ENCODE measurements at regions of chr1 and their contacts with region 1.

Region 1: GRCh38 chr1:181929363-181929762 is 132.1 kb downstream of the ZNF648 start:
- DNase-seq: peak; percentile 16
- H3K4me3 Mint-ChIP-seq: no peak overlapping the region
- H3K27ac Mint-ChIP-seq: no peak overlapping the region
- H3K4me1 Mint-ChIP-seq: no peaks in the 10 kb centered on the region
- H3K27me3 Mint-ChIP-seq: peaks cover 26% of the 10 kb centered on the region
- CTCF ChIP-seq: no peak

Region 2: DNA sequence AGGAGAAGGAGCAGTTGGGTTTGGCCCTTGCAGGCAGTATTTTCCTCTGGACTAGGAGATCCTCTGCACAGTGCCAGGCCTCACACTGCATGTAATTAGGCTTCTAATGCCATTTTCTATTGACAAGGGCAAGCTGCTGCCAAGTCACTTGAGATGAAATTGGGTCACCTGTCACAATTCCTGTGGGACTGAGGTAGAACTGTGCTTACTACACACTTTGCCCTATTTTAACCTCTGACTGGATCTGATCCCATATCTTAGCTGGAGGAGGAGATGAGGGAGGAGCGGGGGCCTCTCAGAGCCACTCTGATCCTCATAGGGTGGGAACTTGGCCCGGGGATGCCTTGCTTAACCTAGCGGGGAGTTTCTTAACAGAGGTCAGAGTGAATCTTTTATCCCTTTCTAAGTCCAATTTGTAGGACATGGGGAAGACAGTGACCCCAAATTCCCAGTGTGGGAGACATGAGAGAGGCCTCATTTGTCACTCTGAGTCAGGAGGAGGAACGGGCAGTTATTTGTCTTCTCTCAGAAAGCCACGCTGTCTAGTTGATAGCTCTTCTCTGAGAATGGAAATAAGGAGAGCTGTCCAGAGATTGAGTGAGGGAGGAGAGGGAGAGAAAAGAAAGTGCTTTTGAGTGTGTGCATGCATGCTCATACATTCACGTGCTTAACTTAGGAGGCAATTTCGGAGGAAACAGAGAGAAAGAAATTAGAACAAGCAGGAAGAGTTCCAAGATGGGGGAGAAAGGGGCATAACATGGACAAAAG is 324.7 kb before region 1 on chr1:
- CTCF ChIA-PET with region 1: no interaction called
- POLR2A ChIA-PET with region 1: no interaction called
- intact Hi-C with region 1: no loop called
- DNase-seq: no peak
- H3K4me3 Mint-ChIP-seq: no peak overlapping the region
- H3K27ac Mint-ChIP-seq: no peak overlapping the region
- H3K4me1 Mint-ChIP-seq: no peaks in the 10 kb centered on the region
- H3K27me3 Mint-ChIP-seq: peaks cover 38% of the 10 kb centered on the region
- CTCF ChIP-seq: no peak

Region 3: DNA sequence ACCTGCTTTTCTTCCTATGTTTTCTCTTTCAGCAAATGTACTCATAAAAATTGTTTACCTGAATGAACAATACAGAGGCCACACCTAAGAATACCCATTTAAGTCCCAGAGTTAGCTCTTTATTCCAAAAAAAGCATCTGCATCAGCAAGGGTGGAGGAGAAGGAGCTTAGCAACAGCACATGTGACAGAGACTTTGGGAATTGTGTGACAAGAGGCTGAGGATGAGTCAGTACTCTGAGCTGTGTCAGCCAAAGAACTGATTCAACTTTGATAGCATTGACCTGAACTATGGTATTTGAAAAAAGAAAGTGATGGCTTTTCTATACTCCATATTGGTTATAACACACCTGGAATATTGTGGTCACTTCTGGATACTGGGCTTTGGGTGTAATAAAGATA is 30.6 kb before region 1 on chr1:
- CTCF ChIA-PET with region 1: no interaction called
- POLR2A ChIA-PET with region 1: no interaction called
- intact Hi-C with region 1: no loop called
- DNase-seq: no peak
- H3K4me3 Mint-ChIP-seq: no peak overlapping the region
- H3K27ac Mint-ChIP-seq: no peak overlapping the region
- H3K4me1 Mint-ChIP-seq: no peaks in the 10 kb centered on the region
- H3K27me3 Mint-ChIP-seq: peaks cover 23% of the 10 kb centered on the region
- CTCF ChIP-seq: no peak

Region 4: DNA sequence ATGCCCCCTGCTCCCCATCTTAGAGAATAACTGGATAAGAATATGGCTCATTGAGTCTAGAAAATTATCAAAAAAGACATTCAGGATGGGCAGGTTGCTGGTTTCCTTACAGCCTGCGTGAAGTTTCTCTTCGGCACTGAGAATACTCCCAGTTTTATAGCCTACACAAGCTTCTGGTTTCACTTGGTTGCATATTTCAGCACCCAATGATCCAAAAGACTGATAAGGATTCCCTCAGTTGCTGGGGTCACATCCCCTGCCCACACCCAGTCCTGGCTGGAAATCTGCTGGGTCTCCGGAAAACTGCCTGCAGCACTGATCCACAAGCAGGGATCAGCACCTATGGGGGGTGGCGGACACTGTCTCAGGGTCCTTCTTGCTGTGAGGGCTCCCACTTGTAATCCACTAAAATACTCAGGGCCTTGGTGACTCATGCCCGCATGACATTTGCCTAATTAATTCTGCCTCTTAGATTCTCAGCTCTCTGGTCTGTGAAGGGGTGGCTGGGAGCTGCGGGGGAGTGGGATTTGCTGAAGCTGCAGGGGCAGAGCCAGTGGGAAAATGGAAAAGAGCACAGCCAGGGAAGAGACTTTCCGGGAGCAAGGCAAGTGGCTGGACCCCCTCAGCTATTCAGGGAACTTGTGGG is 10.4 kb before region 1 on chr1:
- CTCF ChIA-PET with region 1: interaction called, 10 read pairs
- POLR2A ChIA-PET with region 1: interaction called, 3 read pairs
- intact Hi-C with region 1: no loop called
- DNase-seq: no peak
- H3K4me3 Mint-ChIP-seq: no peak overlapping the region
- H3K27ac Mint-ChIP-seq: no peak overlapping the region
- H3K4me1 Mint-ChIP-seq: no peaks in the 10 kb centered on the region
- H3K27me3 Mint-ChIP-seq: peaks cover 18% of the 10 kb centered on the region
- CTCF ChIP-seq: no peak

Measured in MCF 10A (cell line).